B cell (primary cell): ENCODE measurements at regions of chr9 and their contacts with region 1.

Region 1: DNA sequence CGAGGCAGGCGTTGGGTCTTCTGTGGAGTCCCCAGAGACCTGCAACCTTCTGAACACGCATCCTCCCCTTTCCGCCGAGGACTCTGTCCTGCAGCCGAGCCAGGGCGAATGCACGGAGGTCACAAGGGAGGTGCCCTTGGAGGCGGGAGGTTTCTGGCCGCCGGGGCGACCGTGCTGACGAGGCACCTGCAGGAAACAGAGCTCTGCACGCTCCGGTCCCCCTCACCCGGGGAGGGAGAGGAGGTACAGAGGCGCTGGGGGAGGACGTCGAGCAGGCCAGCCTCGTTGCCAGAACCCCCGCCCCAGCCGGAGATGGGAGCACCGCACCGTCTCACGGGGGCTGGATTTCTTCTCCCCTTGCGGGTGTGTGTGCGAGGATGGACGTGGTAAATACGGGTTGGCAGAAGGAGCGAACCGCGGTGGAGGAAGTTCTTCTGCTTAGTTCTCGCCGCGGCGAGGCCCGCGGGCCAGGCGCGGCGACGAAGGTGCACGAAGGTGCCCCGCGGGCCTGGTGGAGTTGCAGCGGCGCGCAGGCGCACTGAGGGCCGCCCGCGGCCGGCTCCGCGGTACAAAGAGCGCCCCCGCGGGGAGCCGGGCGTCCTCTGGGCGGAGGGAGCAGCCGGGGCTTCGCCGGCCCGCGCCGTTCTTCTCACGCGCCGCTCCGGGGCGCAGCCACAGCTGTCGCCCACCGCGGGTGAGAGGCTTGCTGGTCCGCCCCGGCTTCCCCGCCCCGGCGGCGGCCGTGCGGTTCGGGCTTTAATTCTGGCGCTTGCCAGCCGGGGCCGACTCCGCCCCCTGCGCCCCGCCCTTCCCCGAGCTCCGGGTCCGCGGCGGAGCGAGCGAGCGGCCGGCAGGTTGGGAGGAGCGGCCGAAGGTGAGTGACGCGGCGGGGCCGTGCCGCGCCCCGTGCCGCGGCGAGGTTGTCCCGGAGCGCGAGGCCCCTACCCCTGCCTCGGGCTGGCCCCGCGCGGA is 289.5 kb downstream of the DOCK8 start:
- DNase-seq: peak; percentile 90
- ATAC-seq: peak; percentile 80
- H3K4me3 ChIP-seq: peak within 1 kb of the TSS; percentile 44 to 80 (median 58)
- H3K4me3 Mint-ChIP-seq: peak within 1 kb of the TSS; percentile 91
- H3K27ac ChIP-seq: no peak within 1 kb of the TSS
- H3K27ac Mint-ChIP-seq: peak within 1 kb of the TSS; percentile 80
- H3K4me1 ChIP-seq: peaks cover 16 to 19% of the 10 kb centered on the region in 2 donors
- H3K4me1 Mint-ChIP-seq: peaks cover 16% of the 10 kb centered on the region
- H3K27me3 ChIP-seq: peaks cover 0 to 26% (median 6%) of the 10 kb centered on the region in 4 experiments
- H3K27me3 Mint-ChIP-seq: peaks cover 28% of the 10 kb centered on the region
- CTCF ChIP-seq: peak; percentile 57

Region 2: DNA sequence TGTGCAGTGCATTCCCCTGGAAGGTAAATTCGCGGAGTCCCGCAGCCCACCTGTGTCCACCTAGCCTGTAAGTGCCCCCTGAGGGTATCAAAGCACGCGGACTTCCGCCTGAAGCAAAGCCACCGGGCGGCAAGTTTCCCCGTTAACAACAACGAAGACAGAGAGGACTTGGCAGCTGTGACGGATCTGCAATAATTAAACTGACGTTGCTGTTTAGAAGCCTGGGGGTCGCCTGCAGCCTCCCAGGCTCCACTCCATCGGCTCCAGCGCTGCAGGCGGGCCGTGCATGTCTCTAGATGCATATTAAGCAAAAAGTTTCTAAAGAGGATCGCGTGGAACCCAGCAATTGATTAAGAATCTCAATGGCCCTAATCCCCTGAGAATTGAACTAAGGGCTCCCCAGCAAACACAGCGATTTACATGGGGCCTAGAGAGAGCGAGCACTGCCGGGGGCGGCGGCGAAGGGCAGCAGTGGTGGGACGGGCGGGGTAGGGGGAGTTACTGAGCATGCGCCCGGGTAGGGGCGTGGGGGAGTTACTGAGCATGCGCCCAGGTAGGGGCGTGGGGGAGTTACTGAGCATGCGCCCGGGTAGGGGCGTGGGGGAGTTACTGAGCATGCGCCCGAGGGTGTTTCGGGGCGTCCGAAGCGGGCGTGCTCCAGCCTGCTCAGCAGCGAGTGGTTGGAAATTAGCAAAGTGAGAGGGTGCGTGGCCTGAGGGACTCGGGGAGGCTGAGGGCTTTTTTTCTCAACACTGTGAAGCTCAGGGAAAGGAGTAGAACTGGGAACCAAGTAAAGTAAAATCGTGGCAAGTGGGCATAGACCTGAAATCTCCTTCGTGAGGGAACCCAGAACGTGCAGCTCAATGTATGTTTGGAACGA is 34.3 kb before region 1 on chr9:
- CTCF ChIA-PET with region 1: interaction called, 6 read pairs
- POLR2A ChIA-PET with region 1: no interaction called
- intact Hi-C with region 1: loop called (anchors 1 kb)
- DNase-seq: peak; percentile 93
- ATAC-seq: peak; percentile 92
- H3K4me3 ChIP-seq: peak overlapping the region; percentile 73 to 85 (median 76)
- H3K4me3 Mint-ChIP-seq: peak overlapping the region; percentile 99
- H3K27ac ChIP-seq: peak overlapping the region; percentile 58 to 66
- H3K27ac Mint-ChIP-seq: peak overlapping the region; percentile 99
- H3K4me1 ChIP-seq: peaks cover 16 to 27% of the 10 kb centered on the region in 2 donors
- H3K4me1 Mint-ChIP-seq: peaks cover 27% of the 10 kb centered on the region
- H3K27me3 ChIP-seq: no peaks in the 10 kb centered on the region
- H3K27me3 Mint-ChIP-seq: no peaks in the 10 kb centered on the region
- CTCF ChIP-seq: no peak

Region 3: GRCh38 chr9:565528-565927 is 61.4 kb after region 1 on chr9:
- CTCF ChIA-PET with region 1: no interaction called
- POLR2A ChIA-PET with region 1: no interaction called
- intact Hi-C with region 1: loop called (anchors 1 kb)
- DNase-seq: peak; percentile 73
- ATAC-seq: peak; percentile 86
- H3K4me3 ChIP-seq: no peak overlapping the region
- H3K4me3 Mint-ChIP-seq: peak overlapping the region; percentile 42
- H3K27ac ChIP-seq: no peak overlapping the region
- H3K27ac Mint-ChIP-seq: peak overlapping the region; percentile 88
- H3K4me1 ChIP-seq: peaks cover 23 to 30% of the 10 kb centered on the region in 2 donors
- H3K4me1 Mint-ChIP-seq: peaks cover 41% of the 10 kb centered on the region
- H3K27me3 ChIP-seq: no peaks in the 10 kb centered on the region
- H3K27me3 Mint-ChIP-seq: no peaks in the 10 kb centered on the region
- CTCF ChIP-seq: no peak